Dendritic cell treated with granulocyte-macrophage colony-stimulating factor and Interleukin-4, amounts not matched to agents 40 ng/mL and 50 ng/mL, for 4 days (primary cell): ENCODE measurements at regions of chr3 and their contacts with region 1.

Region 1: DNA sequence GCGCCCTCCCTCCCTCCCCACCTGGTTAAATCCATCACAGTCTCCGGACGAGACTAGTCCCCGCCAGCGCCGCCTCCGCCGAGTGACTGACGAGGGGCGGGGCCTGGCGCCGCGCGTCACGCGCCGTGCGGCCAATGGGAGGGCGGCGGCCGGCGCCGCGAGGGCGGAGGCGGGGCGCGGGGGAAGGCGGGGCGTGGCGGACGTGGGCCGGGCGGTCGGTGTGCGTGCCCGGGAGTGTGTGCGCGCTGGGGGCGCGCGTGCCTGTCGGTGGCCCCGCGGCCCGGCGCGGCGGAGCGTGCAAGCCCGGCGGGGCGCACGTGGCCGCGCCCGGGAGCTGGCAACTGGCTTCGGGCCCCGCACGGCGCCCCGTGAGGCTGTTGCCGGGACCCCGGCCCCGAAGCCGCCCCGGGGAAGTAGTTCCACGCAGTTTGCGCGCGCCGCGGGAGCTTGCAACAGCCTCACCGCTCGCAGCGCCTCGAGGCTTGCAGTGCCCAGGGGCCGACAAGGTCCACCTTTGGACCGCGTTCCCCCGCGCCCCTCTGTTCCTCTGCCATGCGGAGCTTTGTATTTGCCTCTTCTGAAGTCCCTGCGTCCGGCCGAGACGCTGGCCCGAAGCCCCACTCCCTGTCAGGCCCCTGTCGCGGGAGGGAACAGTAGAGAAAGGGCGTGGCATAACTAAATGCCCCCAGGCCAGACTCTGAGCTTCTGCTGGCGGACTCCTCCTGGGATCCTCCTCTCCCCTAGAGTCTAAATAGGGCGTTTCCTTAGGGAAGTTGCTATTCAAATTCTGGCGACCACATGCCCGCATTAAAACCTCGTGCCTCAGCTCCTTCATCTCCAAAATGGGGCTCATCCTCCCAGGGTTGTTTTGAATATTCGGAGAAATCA is 400.9 kb downstream of the SHQ1 start:
- H3K4me3 Mint-ChIP-seq: peak overlapping the region; percentile 83
- H3K27ac Mint-ChIP-seq: peak overlapping the region; percentile 74
- H3K4me1 Mint-ChIP-seq: peaks cover 53% of the 10 kb centered on the region
- H3K27me3 Mint-ChIP-seq: peaks cover 12% of the 10 kb centered on the region

Region 2: GRCh38 chr3:72187131-72187530 is 260.2 kb before region 1 on chr3:
- intact Hi-C with region 1: no loop called
- H3K4me3 Mint-ChIP-seq: no peak overlapping the region
- H3K27ac Mint-ChIP-seq: no peak overlapping the region
- H3K4me1 Mint-ChIP-seq: peaks cover 28% of the 10 kb centered on the region
- H3K27me3 Mint-ChIP-seq: peaks cover 38% of the 10 kb centered on the region

Region 3: GRCh38 chr3:72473156-72473555 is 25.9 kb after region 1 on chr3:
- intact Hi-C with region 1: no loop called
- H3K4me3 Mint-ChIP-seq: no peak overlapping the region
- H3K27ac Mint-ChIP-seq: peak overlapping the region; percentile 22
- H3K4me1 Mint-ChIP-seq: peaks cover 21% of the 10 kb centered on the region
- H3K27me3 Mint-ChIP-seq: no peaks in the 10 kb centered on the region

Region 4: DNA sequence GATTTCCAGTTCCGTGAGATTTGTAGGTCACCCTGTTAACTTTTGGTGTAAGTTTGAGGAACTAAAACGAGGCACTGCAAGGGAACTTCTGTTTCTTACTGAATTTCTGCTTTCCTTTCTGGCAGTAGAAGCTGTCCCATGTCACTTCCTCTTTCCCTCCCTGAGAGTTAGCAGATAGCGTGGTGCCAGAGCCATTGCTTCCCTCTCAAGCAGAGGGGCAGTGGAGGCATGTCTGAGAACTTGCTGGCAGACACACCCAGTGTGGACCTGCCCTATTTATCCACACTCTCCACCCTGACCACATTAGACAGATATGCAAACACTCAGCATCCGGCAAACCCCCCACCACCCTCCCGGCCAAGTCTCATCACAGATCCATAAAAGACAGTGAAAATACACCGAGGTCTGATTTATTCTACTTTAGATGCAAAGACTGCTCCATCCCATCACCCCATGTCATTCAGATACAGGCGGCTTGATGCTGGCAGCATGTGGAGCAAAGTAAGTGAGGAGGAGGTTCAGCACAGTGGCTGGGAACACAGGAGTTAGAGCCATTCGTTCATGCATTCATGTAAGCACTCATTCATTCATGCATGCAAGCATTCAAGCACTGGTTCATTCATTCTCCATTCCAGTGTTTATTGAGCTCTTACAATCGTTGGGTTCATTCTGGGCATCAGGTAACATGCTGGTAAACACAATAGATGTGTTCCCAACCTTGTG is 76.3 kb after region 1 on chr3:
- intact Hi-C with region 1: loop called (anchors 1 kb)
- H3K4me3 Mint-ChIP-seq: peak overlapping the region; percentile 27
- H3K27ac Mint-ChIP-seq: peak overlapping the region; percentile 92
- H3K4me1 Mint-ChIP-seq: peaks cover 44% of the 10 kb centered on the region
- H3K27me3 Mint-ChIP-seq: no peaks in the 10 kb centered on the region